ENCODE measurements at regions of chr17 and their contacts with region 1.

Region 1: GRCh38 chr17:66255112-66255511 is 25.9 kb upstream of the APOH start:
- DNase-seq: no peak
- H3K4me3 ChIP-seq: no peak overlapping the region
- H3K27ac ChIP-seq: no peak overlapping the region
- H3K4me1 ChIP-seq: no peaks in the 10 kb centered on the region
- H3K27me3 ChIP-seq: no peaks in the 10 kb centered on the region
- CTCF ChIP-seq: peak; percentile 51 to 77 (median 69)

Region 2: GRCh38 chr17:66567234-66568170 is 312.4 kb after region 1 on chr17:
- intact Hi-C with region 1: loop called (anchors 5 kb)
- DNase-seq: peak; percentile 11 to 71
- H3K4me3 ChIP-seq: no peak overlapping the region
- H3K27ac ChIP-seq: no peak overlapping the region
- H3K4me1 ChIP-seq: no peaks in the 10 kb centered on the region
- H3K27me3 ChIP-seq: no peaks in the 10 kb centered on the region
- CTCF ChIP-seq: peak; percentile 52 to 66 (median 54)

Region 3: GRCh38 chr17:66673668-66674315 is 418.7 kb after region 1 on chr17:
- intact Hi-C with region 1: loop called (anchors 1 kb)
- DNase-seq: no peak
- H3K4me3 ChIP-seq: no peak overlapping the region
- H3K27ac ChIP-seq: no peak overlapping the region
- H3K4me1 ChIP-seq: no peaks in the 10 kb centered on the region
- H3K27me3 ChIP-seq: no peaks in the 10 kb centered on the region
- CTCF ChIP-seq: peak; percentile 40 to 70 (median 44)